B cell (primary cell): ENCODE measurements at regions of chr1 and their contacts with region 1.

Region 1: DNA sequence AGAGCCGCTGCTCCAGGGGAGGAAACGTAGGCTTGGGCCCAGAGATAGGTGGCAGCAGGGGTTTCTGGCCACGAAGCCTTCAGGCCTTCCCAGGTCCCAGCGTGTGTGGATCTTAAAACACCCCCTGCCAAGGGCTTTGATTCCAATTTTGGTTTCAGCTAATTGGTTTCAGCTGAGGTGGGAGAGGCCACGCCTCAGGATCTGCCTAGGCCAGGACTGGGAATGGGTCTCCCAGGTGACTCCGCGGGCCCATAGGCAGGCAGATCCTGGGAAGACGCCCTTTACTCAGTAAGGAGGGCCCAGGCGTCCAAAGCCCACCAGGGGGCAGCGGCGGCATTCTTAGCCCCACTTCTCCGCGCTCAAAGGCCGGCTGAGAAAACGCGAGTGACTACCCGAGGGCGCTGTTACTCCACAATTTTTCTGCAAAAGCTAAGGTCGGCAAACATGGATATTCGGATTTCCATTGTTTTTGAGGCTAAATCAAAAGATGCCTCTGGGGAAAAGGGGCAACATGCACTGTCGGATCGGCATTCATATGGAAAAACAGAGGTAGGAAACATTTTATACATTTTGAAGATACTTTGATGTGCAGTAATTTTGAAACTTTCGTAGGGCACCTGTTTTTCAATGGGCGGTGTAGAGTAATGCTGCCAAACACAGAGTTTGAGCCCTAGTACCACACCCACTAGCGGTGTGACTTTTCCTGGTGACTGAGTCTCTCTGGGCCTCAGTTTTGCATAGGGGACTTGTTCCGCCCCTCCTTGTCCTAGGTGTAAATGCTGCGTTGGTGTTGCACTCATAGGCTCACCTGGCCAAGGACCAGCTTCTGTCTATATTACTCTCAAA is 31.8 kb upstream of the BCL10 start:
- DNase-seq: peak; percentile 80
- ATAC-seq: peak; percentile 96
- H3K4me3 ChIP-seq: peak overlapping the region in 2 of 5 experiments; percentile 28 to 38
- H3K4me3 Mint-ChIP-seq: peak overlapping the region; percentile 84
- H3K27ac ChIP-seq: no peak overlapping the region
- H3K27ac Mint-ChIP-seq: no peak overlapping the region
- H3K4me1 ChIP-seq: peaks cover 8 to 10% of the 10 kb centered on the region in 2 donors
- H3K4me1 Mint-ChIP-seq: peaks cover 9% of the 10 kb centered on the region
- H3K27me3 ChIP-seq: peaks cover 0 to 11% (median 6%) of the 10 kb centered on the region in 4 experiments
- H3K27me3 Mint-ChIP-seq: peaks cover 15% of the 10 kb centered on the region
- CTCF ChIP-seq: peak; percentile 90

Region 2: DNA sequence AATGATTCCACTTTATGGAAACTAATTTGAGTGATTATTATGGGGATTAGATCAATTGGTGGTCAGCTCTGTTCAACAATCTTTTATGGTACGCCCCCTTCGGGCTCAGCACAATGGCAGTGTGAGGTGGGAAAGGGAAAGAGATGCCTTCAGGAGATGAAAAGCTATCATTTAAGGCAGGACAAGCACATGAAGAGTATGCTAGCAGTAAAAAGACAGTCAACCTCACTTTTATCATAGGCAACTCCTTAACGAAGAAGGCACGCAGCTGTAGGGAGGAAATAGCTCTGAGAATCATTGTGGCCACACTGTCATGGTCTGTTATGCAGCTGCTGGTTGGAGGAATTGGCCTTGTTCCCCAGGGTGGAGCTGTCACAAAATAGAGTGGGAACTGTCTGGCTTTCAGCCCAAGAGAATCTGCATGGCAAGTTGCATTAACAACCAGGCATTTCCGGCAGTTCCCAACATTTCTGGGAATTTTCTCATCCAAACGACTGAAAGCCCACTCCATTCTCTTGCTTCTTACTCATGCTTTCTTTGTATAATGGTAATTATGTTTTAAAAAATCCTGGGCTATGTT is 22.6 kb after region 1 on chr1:
- CTCF ChIA-PET with region 1: no interaction called
- POLR2A ChIA-PET with region 1: no interaction called
- intact Hi-C with region 1: no loop called
- DNase-seq: peak; percentile 43
- ATAC-seq: peak; percentile 65
- H3K4me3 ChIP-seq: no peak overlapping the region
- H3K4me3 Mint-ChIP-seq: peak overlapping the region; percentile 9
- H3K27ac ChIP-seq: no peak overlapping the region
- H3K27ac Mint-ChIP-seq: no peak overlapping the region
- H3K4me1 ChIP-seq: peaks cover 40 to 44% of the 10 kb centered on the region in 2 donors
- H3K4me1 Mint-ChIP-seq: peaks cover 45% of the 10 kb centered on the region
- H3K27me3 ChIP-seq: peaks cover 0 to 8% (median 0%) of the 10 kb centered on the region in 4 experiments
- H3K27me3 Mint-ChIP-seq: no peaks in the 10 kb centered on the region
- CTCF ChIP-seq: no peak

Region 3: GRCh38 chr1:85398391-85399064 is 90.3 kb after region 1 on chr1:
- CTCF ChIA-PET with region 1: interaction called, 6 read pairs
- POLR2A ChIA-PET with region 1: no interaction called
- intact Hi-C with region 1: loop called (anchors 10 kb)
- DNase-seq: no peak
- ATAC-seq: no peak
- H3K4me3 ChIP-seq: no peak overlapping the region
- H3K4me3 Mint-ChIP-seq: no peak overlapping the region
- H3K27ac ChIP-seq: no peak overlapping the region
- H3K27ac Mint-ChIP-seq: no peak overlapping the region
- H3K4me1 ChIP-seq: no peaks in the 10 kb centered on the region
- H3K4me1 Mint-ChIP-seq: no peaks in the 10 kb centered on the region
- H3K27me3 ChIP-seq: no peaks in the 10 kb centered on the region
- H3K27me3 Mint-ChIP-seq: no peaks in the 10 kb centered on the region
- CTCF ChIP-seq: no peak

Region 4: DNA sequence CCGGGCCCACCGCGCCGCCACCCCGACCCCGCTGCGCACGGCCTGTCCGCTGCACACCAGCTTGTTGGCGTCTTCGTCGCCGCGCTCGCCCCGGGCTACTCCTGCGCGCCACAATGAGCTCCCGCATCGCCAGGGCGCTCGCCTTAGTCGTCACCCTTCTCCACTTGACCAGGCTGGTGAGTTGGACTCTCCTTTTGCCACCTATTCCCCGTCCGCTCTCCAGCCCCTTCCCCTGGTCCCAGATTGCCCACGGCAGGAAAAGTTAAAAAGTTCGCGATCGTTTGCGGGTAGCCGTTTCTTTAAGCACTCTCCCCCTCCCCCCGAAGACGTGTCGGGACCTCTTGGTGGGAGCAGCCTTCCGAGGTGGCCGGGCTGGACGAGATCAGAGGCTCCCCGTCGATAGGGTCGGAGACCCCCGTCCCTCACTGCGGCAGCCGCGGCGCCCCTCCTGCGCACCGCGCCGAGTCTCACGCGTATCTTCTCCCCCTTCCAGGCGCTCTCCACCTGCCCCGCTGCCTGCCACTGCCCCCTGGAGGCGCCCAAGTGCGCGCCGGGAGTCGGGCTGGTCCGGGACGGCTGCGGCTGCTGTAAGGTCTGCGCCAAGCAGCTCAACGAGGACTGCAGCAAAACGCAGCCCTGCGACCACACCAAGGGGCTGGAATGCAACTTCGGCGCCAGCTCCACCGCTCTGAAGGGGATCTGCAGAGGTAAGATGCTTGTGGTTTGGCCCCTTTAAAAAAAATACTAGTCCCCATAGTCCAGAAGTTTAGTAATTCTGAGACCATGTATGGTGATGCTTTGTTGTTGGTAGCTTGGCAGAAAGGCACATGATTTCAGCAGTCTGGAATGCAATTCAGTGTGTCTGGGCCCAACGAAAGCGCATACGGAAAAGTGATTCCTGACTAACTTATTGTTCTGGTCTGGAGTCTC is 272.9 kb after region 1 on chr1:
- CTCF ChIA-PET with region 1: interaction called, 9 read pairs
- POLR2A ChIA-PET with region 1: no interaction called
- intact Hi-C with region 1: loop called (anchors 2 kb)
- DNase-seq: peak; percentile 61
- ATAC-seq: no peak
- H3K4me3 ChIP-seq: peak overlapping the region in 4 of 5 experiments; percentile 22 to 58 (median 44)
- H3K4me3 Mint-ChIP-seq: peak overlapping the region; percentile 90
- H3K27ac ChIP-seq: no peak overlapping the region
- H3K27ac Mint-ChIP-seq: no peak overlapping the region
- H3K4me1 ChIP-seq: peaks cover 31 to 40% of the 10 kb centered on the region in 2 donors
- H3K4me1 Mint-ChIP-seq: peaks cover 30% of the 10 kb centered on the region
- H3K27me3 ChIP-seq: peaks cover 0 to 66% (median 43%) of the 10 kb centered on the region in 4 experiments
- H3K27me3 Mint-ChIP-seq: peaks cover 72% of the 10 kb centered on the region
- CTCF ChIP-seq: peak; percentile 45

Region 5: GRCh38 chr1:85911742-85912141 is 603.5 kb after region 1 on chr1:
- CTCF ChIA-PET with region 1: interaction called, 6 read pairs
- POLR2A ChIA-PET with region 1: no interaction called
- intact Hi-C with region 1: loop called (anchors 2 kb)
- DNase-seq: peak; percentile 2
- ATAC-seq: no peak
- H3K4me3 ChIP-seq: no peak overlapping the region
- H3K4me3 Mint-ChIP-seq: no peak overlapping the region
- H3K27ac ChIP-seq: no peak overlapping the region
- H3K27ac Mint-ChIP-seq: no peak overlapping the region
- H3K4me1 ChIP-seq: no peaks in the 10 kb centered on the region
- H3K4me1 Mint-ChIP-seq: no peaks in the 10 kb centered on the region
- H3K27me3 ChIP-seq: no peaks in the 10 kb centered on the region
- H3K27me3 Mint-ChIP-seq: no peaks in the 10 kb centered on the region
- CTCF ChIP-seq: no peak